AG04450 (cell line): ENCODE measurements at regions of chr4 and their contacts with region 1.

Region 1: DNA sequence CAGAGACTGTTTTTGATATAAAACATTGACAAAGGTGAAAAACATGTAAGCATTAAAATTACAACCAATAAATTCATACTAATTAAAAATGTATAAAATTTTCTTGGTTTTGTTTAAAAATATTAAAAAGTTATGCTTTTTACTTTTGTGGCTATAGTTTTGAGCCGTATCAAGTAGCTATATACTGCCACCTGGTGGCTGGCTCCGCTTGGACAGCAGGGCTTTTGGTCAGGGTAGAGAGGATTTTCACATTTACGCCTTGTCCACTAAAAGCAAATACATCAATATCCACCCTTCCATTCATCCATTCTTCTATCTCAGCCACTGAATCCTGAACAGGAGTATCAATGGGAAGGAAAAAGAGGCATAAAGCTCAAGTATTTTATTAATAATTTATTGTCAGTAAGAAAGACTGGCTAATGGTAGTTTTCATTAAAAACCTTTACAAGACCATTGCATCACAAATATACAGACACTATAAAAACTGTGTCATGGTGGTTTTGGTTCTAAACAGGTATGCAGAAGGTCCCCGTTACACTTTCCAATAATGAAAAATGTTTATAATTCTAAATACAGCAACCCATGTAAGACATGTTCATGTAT is 32.1 kb upstream of the MTNR1A start:
- DNase-seq: peak; percentile 36
- H3K4me3 ChIP-seq: no peak overlapping the region
- H3K27ac ChIP-seq: no peak overlapping the region
- H3K27me3 ChIP-seq: no peaks in the 10 kb centered on the region
- CTCF ChIP-seq: peak; percentile 85

Region 2: DNA sequence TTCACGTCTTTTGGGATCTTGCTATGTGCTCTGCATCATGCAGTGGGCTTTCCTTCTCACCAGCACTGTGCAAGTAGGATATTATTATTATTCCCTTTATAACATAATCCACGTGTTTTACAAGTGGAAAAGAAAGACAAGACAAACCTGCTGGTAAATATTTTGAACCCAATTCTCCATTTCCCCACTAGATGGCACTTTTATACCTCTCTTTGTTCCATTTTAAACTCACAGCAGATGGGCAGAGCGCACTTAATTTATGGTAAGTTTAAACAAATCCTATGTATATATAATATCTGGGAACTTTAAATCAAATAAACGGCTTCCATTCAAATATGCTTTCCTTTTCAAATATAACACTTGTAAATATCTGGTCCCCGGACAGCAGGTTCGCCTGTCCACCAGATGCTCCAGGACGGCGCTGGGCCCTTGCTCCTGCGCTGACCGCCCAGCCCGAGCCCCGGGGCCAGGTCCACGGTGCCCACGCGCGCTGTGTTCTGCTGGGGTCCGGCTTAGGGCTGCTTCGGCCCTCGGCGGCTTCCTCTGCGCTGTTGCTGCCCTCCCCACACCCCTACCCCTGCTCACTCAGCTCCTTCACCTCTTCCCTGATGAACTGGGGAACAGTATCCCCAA is 290.4 kb before region 1 on chr4:
- CTCF ChIA-PET with region 1: interaction called, 63 read pairs
- POLR2A ChIA-PET with region 1: no interaction called
- DNase-seq: peak; percentile 42
- H3K4me3 ChIP-seq: no peak overlapping the region
- H3K27ac ChIP-seq: no peak overlapping the region
- H3K27me3 ChIP-seq: peaks cover 7% of the 10 kb centered on the region
- CTCF ChIP-seq: peak; percentile 75

Region 3: DNA sequence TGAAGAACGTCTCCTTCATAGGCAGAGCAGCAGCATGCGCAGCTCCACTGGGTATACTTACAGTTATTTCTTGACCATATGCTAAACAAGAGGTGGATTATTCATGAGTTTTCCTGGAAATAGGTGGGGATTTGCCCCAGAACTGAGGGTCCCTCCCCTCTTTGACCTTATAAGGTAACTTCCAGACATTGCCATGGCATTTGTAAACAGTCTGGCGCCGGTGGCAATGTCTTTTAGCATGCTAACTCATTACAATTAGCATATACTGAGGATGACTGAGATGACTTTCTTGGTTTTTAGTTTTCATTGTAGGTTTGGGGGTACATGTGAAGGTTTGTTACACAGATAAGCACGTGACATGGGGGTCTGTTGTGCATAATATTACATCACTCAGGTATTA is 129.5 kb before region 1 on chr4:
- CTCF ChIA-PET with region 1: no interaction called
- POLR2A ChIA-PET with region 1: no interaction called
- DNase-seq: no peak
- H3K4me3 ChIP-seq: no peak overlapping the region
- H3K27ac ChIP-seq: no peak overlapping the region
- H3K27me3 ChIP-seq: no peaks in the 10 kb centered on the region
- CTCF ChIP-seq: no peak

Region 4: GRCh38 chr4:186557486-186557885 is 30.0 kb before region 1 on chr4:
- CTCF ChIA-PET with region 1: interaction called, 10 read pairs
- POLR2A ChIA-PET with region 1: no interaction called
- DNase-seq: no peak
- H3K4me3 ChIP-seq: no peak overlapping the region
- H3K27ac ChIP-seq: no peak overlapping the region
- H3K27me3 ChIP-seq: peaks cover 15% of the 10 kb centered on the region
- CTCF ChIP-seq: no peak

Region 5: GRCh38 chr4:186598686-186599085 is 11.2 kb after region 1 on chr4:
- CTCF ChIA-PET with region 1: interaction called, 38 read pairs
- POLR2A ChIA-PET with region 1: no interaction called
- DNase-seq: no peak
- H3K4me3 ChIP-seq: no peak overlapping the region
- H3K27ac ChIP-seq: no peak overlapping the region
- H3K27me3 ChIP-seq: no peaks in the 10 kb centered on the region
- CTCF ChIP-seq: no peak

Region 6: DNA sequence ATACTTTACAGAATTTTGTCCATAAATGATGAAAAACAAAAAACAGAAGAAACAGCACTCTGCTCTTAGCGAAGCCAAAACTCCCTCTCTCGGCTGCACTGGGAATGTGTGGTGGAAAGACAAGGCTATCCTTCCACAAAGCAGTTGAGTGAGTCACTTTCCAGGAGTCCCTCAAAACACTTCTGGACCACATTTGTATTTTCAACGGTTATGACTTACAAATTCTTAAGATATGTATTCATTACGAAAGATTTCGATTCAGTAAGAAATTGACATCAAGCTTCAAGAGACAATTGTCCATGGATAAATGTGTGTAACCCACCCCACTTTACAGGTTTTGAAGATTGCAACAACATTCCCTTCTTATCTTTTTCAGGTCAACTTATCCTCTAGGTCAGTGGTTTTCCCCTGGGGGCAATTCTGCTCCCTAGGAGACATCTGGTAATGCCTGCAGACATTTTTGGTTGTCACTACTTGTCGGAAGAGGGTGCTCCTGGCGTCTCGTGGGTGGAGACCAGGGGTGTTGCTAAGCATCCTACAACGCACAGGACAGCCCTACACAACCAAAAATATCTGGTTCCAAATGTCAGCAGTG is 34.5 kb after region 1 on chr4:
- CTCF ChIA-PET with region 1: interaction called, 20 read pairs
- POLR2A ChIA-PET with region 1: no interaction called
- DNase-seq: peak; percentile 65
- H3K4me3 ChIP-seq: no peak overlapping the region
- H3K27ac ChIP-seq: peak overlapping the region; percentile 58
- H3K27me3 ChIP-seq: no peaks in the 10 kb centered on the region
- CTCF ChIP-seq: peak; percentile 80

Region 7: DNA sequence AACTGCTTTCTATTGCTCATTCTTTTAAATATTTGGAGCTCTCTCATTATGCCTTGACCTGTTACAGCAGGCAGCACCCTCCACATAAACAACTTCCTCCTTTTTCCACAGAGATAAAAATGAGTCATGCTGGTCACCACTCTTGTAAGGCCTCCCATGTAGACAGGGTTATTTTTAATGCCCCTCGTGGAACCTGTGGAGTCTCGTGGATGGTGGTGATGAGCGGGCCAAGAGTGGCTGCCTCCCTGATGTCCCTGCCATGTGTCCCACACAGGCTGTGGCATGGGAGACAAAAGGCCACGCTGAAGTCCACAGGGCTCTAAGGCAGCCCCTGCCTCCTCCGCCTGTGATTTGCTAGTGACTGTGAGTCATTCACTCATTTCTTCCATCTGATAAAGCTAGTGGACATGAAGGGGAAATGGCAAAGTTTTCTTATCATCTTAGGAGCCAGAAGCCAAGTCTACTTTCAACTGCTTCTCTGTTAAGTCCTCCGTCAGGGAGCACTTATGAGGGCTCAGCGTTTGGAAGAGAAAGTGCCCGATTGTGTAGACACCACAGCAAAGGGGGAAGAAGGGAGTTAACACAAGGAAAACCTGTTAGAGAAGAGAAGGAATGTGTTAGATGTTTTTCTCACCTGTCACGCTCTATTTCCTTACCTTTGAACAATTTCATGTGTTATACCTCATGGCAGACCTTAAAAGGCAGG is 257.8 kb after region 1 on chr4:
- CTCF ChIA-PET with region 1: no interaction called
- POLR2A ChIA-PET with region 1: no interaction called
- DNase-seq: peak; percentile 82
- H3K4me3 ChIP-seq: no peak overlapping the region
- H3K27ac ChIP-seq: peak overlapping the region; percentile 92
- H3K27me3 ChIP-seq: no peaks in the 10 kb centered on the region
- CTCF ChIP-seq: no peak